Left cardiac atrium (tissue), 4 donors: ENCODE measurements at regions of chr13 and their contacts with region 1.

Region 1: GRCh38 chr13:77918391-77919245 is at the start of gene EDNRB:
- DNase-seq: peak; percentile 74
- ATAC-seq: peak; percentile 69 to 78
- total RNA-seq, gene EDNRB: 29.5 to 54.3 TPM

Region 2: DNA sequence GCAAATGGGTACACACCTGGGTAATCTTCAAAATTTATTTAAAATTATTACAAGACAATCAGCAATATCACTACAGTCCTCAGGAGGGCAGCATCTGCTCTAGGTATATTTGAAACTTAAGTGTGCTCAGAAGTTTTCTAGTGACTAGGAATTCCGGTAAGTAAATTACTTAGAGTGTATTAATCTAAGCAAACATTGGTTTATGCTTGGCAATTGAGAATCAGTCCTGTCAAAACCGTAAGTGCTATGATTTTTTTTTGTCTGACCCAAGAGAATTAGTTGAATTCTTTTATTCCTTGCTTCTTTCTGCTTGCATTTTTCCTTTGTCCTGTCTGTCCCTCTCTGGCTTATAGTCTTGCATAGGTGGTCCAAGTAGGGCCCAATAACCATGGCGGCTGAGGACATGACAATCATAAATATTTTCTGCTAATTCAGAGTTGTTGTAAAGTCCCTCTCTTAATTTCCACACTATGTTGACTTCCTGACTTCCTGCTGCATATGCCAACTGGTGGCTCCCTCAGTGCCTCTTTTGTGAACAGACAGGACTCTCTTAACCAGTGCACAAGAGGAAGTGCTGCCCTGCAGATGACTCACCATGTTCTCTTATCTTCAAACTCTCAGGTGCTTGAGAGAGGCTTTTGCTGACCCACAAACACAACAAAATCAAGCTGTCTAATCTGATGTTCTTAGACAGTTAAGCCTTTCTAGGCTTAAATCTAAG is 138.9 kb before region 1 on chr13:
- intact Hi-C with region 1: loop called in 1 of 2 experiments (anchors 10 kb)
- DNase-seq: no peak
- ATAC-seq: peak; percentile 57 to 76

Region 3: DNA sequence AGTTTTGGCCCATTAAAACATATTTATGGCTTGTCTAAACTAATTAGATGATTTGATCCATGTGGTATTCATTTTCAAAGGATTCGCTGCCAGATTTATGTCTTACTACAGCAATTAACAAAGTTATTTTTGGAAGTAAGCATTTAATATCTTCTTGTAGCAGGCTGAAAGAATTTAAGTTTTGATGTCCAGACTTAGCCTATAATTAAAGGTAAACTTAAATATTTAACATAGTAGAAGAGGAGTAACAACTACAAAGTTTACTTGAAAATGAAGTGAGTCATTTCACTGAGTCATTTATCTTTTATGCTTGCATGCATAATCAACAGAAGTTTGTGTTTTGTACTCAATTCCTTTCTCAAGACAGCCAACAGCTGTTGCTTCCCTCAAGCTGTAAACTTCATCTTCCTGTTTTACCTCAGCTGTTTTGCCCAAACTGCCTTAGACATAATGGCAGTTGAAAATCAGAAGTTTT is 58.1 kb before region 1 on chr13:
- intact Hi-C with region 1: loop called in 1 of 2 experiments (anchors 10 kb)
- DNase-seq: no peak
- ATAC-seq: peak in 1 of 2 donors; percentile 82

Region 4: GRCh38 chr13:77985866-77986636 is 67.4 kb after region 1 on chr13:
- intact Hi-C with region 1: loop called in 1 of 2 experiments (anchors 5 kb)
- DNase-seq: no peak
- ATAC-seq: peak; percentile 38 to 41

Region 5: GRCh38 chr13:78121459-78122348 is 203.1 kb after region 1 on chr13:
- intact Hi-C with region 1: loop called in 1 of 2 experiments (anchors 5 kb)
- DNase-seq: peak; percentile 53
- ATAC-seq: peak; percentile 30